Dorsolateral prefrontal cortex (tissue), 120 donors: ENCODE measurements at regions of chr21 and their contacts with region 1.

Region 1: GRCh38 chr21:29351691-29352090 is 53.0 kb downstream of the BACH1 start:
- DNase-seq: no peak
- H3K4me3 ChIP-seq: no peak overlapping the region
- H3K27ac ChIP-seq: no peak overlapping the region
- H3K27me3 ChIP-seq: no peaks in the 10 kb centered on the region
- CTCF ChIP-seq: no peak

Region 2: DNA sequence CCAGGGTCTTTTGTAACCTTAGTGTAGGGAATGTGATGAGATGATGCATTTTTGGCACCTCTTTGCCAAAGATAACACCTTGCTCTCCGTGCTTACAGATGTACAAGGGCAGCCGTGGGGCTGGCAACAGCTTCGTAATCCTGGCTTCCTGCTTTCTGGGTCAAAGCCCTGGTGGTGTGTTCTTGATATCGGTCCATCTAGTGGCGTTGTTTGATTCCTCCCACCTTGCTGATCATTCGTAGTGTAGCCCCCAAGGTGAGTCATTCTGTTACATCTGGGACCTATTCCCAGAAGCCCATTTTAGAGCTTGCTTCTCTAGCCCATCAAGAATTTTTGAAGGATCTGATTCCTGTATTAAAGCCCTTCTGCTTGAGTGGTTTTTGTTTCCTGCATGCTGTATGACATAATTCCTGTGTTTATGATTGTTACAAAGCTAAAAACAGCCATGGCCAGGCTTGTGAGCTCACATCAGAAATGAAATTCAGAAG is 271.2 kb before region 1 on chr21:
- intact Hi-C with region 1: loop called in 1 of 2 experiments (anchors 5 kb)
- DNase-seq: no peak
- H3K4me3 ChIP-seq: peak overlapping the region in 1 of 59 donors; percentile 8
- H3K27ac ChIP-seq: peak overlapping the region in 23 of 59 donors; percentile 0 to 89 (median 25)
- H3K27me3 ChIP-seq: no peaks in the 10 kb centered on the region
- CTCF ChIP-seq: no peak

Region 3: DNA sequence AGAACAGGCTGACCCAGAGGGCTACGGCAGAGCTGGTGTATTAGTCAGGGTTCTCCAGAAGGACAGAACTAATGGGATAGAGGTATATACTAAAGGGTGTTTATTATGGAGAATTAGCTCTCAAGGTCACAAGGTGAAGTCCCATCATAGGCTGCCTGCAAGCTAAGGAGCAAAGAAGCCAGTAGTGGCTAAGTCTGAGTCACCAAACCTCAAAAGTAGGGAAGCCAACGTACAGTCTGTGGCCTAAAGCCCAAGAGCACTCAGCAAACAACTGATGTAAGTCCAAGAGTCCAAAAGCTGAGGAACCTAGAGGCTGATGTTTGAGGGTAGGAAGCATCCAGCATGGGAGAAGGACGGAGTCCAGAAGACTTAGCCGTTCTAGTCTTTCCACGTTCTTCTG is 126.2 kb after region 1 on chr21:
- intact Hi-C with region 1: no loop called
- DNase-seq: no peak
- H3K4me3 ChIP-seq: no peak overlapping the region
- H3K27ac ChIP-seq: no peak overlapping the region
- H3K27me3 ChIP-seq: no peaks in the 10 kb centered on the region
- CTCF ChIP-seq: no peak